Activated CD4-positive, alpha-beta T cell treated with anti-CD3 and anti-CD28 coated beads for 36 hours (primary cell): ENCODE measurements at regions of chr7 and their contacts with region 1.

Region 1: GRCh38 chr7:3358991-3359390 is 57.9 kb downstream of the SDK1 start:
- DNase-seq: no peak
- ATAC-seq: no peak
- H3K4me3 Mint-ChIP-seq: no peak overlapping the region
- H3K27ac Mint-ChIP-seq: no peak overlapping the region
- H3K4me1 Mint-ChIP-seq: no peaks in the 10 kb centered on the region
- H3K27me3 Mint-ChIP-seq: no peaks in the 10 kb centered on the region

Region 2: DNA sequence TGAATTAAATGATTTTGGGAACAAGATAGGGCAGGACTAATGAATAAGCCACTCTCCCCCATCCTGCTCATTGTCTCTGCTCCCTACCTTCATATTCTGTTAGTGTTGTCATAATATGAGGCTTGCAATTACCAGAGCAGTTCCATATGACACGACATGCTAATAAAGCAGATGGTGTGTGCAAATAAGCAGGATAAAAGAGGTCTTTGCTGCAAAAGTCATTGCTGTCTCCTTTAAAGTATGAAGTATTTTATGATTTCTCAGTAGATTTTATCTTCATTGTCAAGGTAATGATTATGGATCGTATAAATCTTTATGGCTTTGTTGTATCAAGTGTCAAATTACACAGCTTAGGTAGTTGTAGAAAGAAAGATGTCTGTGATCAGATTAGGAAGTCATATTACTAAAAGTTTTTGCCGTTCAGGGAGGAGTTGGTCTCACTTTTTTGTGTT is 56.9 kb after region 1 on chr7:
- CTCF ChIA-PET with region 1: no interaction called
- POLR2A ChIA-PET with region 1: no interaction called
- intact Hi-C with region 1: loop called in 1 of 2 experiments (anchors 10 kb)
- DNase-seq: no peak
- ATAC-seq: no peak
- H3K4me3 Mint-ChIP-seq: no peak overlapping the region
- H3K27ac Mint-ChIP-seq: no peak overlapping the region
- H3K4me1 Mint-ChIP-seq: peaks cover 4% of the 10 kb centered on the region
- H3K27me3 Mint-ChIP-seq: peaks cover 9% of the 10 kb centered on the region

Region 3: DNA sequence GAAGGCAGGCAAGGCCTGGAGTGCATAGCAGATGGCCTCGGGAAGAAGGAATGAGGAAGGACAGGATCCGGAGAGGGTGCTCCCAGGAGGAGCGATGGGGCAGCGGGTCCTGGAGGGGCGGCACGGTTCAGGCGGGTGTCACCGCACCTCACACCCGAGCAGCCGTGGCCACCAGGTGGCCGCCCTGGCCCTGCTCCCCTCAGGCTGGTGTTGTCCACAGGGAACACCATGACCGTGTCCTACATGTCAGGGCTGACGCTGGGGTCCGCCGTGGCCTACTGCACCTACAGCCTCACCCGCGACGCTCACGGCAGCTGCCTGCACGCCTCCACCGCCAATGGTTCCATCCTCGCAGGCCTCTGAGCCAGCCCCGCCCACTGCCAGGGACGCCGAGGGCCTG is 1943.6 kb after region 1 on chr7:
- CTCF ChIA-PET with region 1: no interaction called
- POLR2A ChIA-PET with region 1: no interaction called
- intact Hi-C with region 1: no loop called
- DNase-seq: no peak
- ATAC-seq: no peak
- H3K4me3 Mint-ChIP-seq: no peak overlapping the region
- H3K27ac Mint-ChIP-seq: no peak overlapping the region
- H3K4me1 Mint-ChIP-seq: no peaks in the 10 kb centered on the region
- H3K27me3 Mint-ChIP-seq: no peaks in the 10 kb centered on the region